IMR-90 (cell line): ENCODE measurements at regions of chr1 and their contacts with region 1.

Region 1: GRCh38 chr1:179081687-179082332 is at the start of gene TOR3A:
- DNase-seq: peak; percentile 85
- ATAC-seq: peak; percentile 92
- H3K4me3 ChIP-seq: peak within 1 kb of the TSS; percentile 79
- H3K27ac ChIP-seq: peak within 1 kb of the TSS; percentile 73
- H3K4me1 ChIP-seq: peaks cover 12% of the 10 kb centered on the region
- H3K27me3 ChIP-seq: no peaks in the 10 kb centered on the region
- CTCF ChIP-seq: no peak
- POLR2A ChIP-seq: peak; percentile 64; the same call in 1 of the 2 replicates
- RAD21 ChIP-seq: 0 out of 2 replicates have a peak, but pooled peaks have one; percentile 8
- total RNA-seq, gene TOR3A: 11.9 and 16.8 TPM in 2 replicates

Region 2: GRCh38 chr1:178220094-178220493 is 861.7 kb before region 1 on chr1:
- CTCF ChIA-PET with region 1: no interaction called
- POLR2A ChIA-PET with region 1: no interaction called
- dilution Hi-C with region 1: no loop called
- in situ Hi-C with region 1: no loop called
- intact Hi-C with region 1: no loop called
- DNase-seq: peak; percentile 65
- ATAC-seq: peak; percentile 42; the same call in 1 of the 2 replicates
- H3K4me3 ChIP-seq: no peak overlapping the region
- H3K27ac ChIP-seq: no peak overlapping the region
- H3K4me1 ChIP-seq: peaks cover 2% of the 10 kb centered on the region; the same call in 1 of the 2 replicates
- H3K27me3 ChIP-seq: no peaks in the 10 kb centered on the region
- CTCF ChIP-seq: no peak
- POLR2A ChIP-seq: no peak
- RAD21 ChIP-seq: no peak

Region 3: GRCh38 chr1:179025125-179025974 is 56.5 kb before region 1 on chr1 and contains the start of gene FAM20B:
- CTCF ChIA-PET with region 1: no interaction called
- POLR2A ChIA-PET with region 1: no interaction called
- dilution Hi-C with region 1: no loop called
- in situ Hi-C with region 1: no loop called
- intact Hi-C with region 1: loop called (anchors 5 kb)
- DNase-seq: peak; percentile 88
- ATAC-seq: peak; percentile 95
- H3K4me3 ChIP-seq: peak within 1 kb of the TSS; percentile 90
- H3K27ac ChIP-seq: peak within 1 kb of the TSS; percentile 33
- H3K4me1 ChIP-seq: no peaks in the 10 kb centered on the region
- H3K27me3 ChIP-seq: no peaks in the 10 kb centered on the region
- CTCF ChIP-seq: no peak
- POLR2A ChIP-seq: no peak
- RAD21 ChIP-seq: no peak
- total RNA-seq, gene FAM20B: 36.7 and 38.4 TPM in 2 replicates

Region 4: GRCh38 chr1:179046808-179047635 is 34.8 kb before region 1 on chr1:
- CTCF ChIA-PET with region 1: no interaction called
- POLR2A ChIA-PET with region 1: no interaction called
- dilution Hi-C with region 1: no loop called
- in situ Hi-C with region 1: no loop called
- intact Hi-C with region 1: no loop called
- DNase-seq: no peak
- ATAC-seq: peak; percentile 30
- H3K4me3 ChIP-seq: no peak overlapping the region
- H3K27ac ChIP-seq: no peak overlapping the region
- H3K4me1 ChIP-seq: peaks cover 3% of the 10 kb centered on the region
- H3K27me3 ChIP-seq: no peaks in the 10 kb centered on the region
- CTCF ChIP-seq: no peak
- POLR2A ChIP-seq: no peak
- RAD21 ChIP-seq: no peak

Region 5: GRCh38 chr1:179094823-179095222 is 13.0 kb after region 1 on chr1:
- CTCF ChIA-PET with region 1: no interaction called
- POLR2A ChIA-PET with region 1: no interaction called
- dilution Hi-C with region 1: no loop called
- in situ Hi-C with region 1: no loop called
- intact Hi-C with region 1: no loop called
- DNase-seq: no peak
- ATAC-seq: no peak
- H3K4me3 ChIP-seq: no peak overlapping the region
- H3K27ac ChIP-seq: no peak overlapping the region
- H3K4me1 ChIP-seq: peaks cover 10% of the 10 kb centered on the region
- H3K27me3 ChIP-seq: no peaks in the 10 kb centered on the region
- CTCF ChIP-seq: no peak
- POLR2A ChIP-seq: no peak
- RAD21 ChIP-seq: no peak

Region 6: DNA sequence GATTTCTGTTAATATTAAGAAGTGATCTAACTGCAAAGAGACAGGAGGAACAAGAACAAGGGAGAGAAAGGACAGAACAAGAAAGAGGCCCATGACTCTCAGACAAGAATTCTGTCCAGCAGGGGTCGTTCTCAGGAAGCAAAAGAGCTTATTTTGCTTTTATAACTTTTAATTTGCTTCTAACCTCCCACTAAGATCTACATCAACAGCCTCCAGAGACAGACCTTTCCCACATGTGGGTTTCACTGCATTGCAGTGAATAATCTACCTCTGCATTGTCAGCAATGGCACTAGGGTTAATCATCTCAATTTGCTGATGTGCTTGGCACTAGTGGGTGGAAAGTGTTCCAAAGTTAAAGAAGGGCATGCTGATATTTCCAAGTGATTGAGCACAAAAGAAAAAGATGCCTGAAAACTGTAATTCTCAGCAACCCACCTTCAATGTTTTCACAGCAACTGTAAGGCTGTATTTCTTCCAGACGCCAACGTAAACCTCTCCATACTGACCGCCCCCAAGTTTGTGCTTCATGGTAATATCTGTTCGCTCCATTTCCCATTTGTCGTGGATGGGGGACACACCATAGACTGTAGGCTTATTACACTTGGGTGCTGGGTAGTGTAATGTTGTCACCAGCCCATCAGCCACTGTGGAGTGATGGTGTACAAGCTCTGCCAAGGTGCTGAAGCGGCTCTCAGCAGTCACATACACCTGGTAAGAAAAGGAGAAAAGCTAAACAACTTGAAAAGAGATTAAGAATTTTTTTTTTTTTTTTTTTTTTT is 39.5 kb after region 1 on chr1:
- CTCF ChIA-PET with region 1: no interaction called
- POLR2A ChIA-PET with region 1: no interaction called
- dilution Hi-C with region 1: no loop called
- in situ Hi-C with region 1: no loop called
- intact Hi-C with region 1: loop called (anchors 2 kb)
- DNase-seq: peak; percentile 62
- ATAC-seq: peak; percentile 66
- H3K4me3 ChIP-seq: no peak overlapping the region
- H3K27ac ChIP-seq: no peak overlapping the region; the same call in 1 of the 2 replicates
- H3K4me1 ChIP-seq: peaks cover 5% of the 10 kb centered on the region
- H3K27me3 ChIP-seq: no peaks in the 10 kb centered on the region
- CTCF ChIP-seq: peak; percentile 64
- POLR2A ChIP-seq: no peak
- RAD21 ChIP-seq: peak; percentile 62

Region 7: GRCh38 chr1:179293340-179294327 is 211.8 kb after region 1 on chr1 and contains the start of gene SOAT1:
- CTCF ChIA-PET with region 1: interaction called, 3 read pairs
- POLR2A ChIA-PET with region 1: no interaction called
- dilution Hi-C with region 1: no loop called
- in situ Hi-C with region 1: no loop called
- intact Hi-C with region 1: loop called (anchors 1 kb)
- DNase-seq: peak; percentile 88
- ATAC-seq: peak; percentile 98
- H3K4me3 ChIP-seq: peak within 1 kb of the TSS; percentile 85
- H3K27ac ChIP-seq: peak within 1 kb of the TSS; percentile 89
- H3K4me1 ChIP-seq: peaks cover 2% of the 10 kb centered on the region; the same call in 1 of the 2 replicates
- H3K27me3 ChIP-seq: no peaks in the 10 kb centered on the region
- CTCF ChIP-seq: peak; percentile 18; the same call in 1 of the 2 replicates
- POLR2A ChIP-seq: peak; percentile 83
- RAD21 ChIP-seq: no peak; the same call in 1 of the 2 replicates
- total RNA-seq, gene SOAT1: 19.5 and 28.9 TPM in 2 replicates

Region 8: DNA sequence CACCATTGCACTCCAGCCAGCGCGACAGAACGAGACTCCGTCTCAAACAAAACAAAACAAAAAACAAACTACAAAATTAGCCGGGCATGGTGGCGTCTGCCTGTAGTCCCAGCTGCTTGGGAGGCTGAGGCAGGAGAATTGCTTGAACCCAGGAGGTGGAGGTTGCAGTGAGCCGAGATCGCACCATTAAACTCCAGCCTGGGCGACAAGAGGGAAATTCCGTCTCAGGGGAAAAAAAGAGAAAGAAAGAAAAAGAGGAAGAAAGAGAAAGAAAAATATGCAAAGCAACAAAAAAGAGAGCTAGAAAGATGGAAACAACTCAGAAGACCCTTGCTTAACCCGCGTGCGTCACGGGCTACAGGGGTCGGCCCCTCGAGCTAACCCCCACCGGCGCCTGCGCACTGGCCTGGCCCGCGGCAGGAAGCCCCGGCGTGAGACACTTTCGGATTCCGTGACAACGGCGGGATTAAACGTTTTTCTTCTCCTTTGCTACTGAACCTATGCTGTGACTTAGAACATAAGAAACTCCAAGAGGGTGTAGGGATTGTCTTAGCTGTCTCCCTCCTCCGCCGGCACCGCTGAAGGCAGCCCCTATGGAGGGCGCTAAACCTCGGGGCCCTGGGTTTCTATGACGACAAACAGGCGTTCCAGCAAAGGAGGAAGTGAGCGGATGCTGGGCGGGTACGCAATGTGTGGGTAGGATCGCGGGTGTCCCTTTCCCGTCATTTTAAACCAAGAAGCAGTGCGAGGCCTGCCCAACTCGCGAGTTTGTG is 283.7 kb after region 1 on chr1 and contains the start of gene AXDND1:
- CTCF ChIA-PET with region 1: no interaction called
- POLR2A ChIA-PET with region 1: no interaction called
- dilution Hi-C with region 1: no loop called
- in situ Hi-C with region 1: loop called (anchors 5 kb)
- intact Hi-C with region 1: loop called (anchors 1 kb)
- DNase-seq: peak; percentile 80
- ATAC-seq: peak; percentile 95
- H3K4me3 ChIP-seq: peak within 1 kb of the TSS; percentile 58
- H3K27ac ChIP-seq: peak within 1 kb of the TSS; percentile 91
- H3K4me1 ChIP-seq: peaks cover 3% of the 10 kb centered on the region; the same call in 1 of the 2 replicates
- H3K27me3 ChIP-seq: no peaks in the 10 kb centered on the region
- CTCF ChIP-seq: peak; percentile 28
- POLR2A ChIP-seq: no peak; the same call in 1 of the 2 replicates
- RAD21 ChIP-seq: no peak
- total RNA-seq, gene AXDND1: under 0.01 TPM in 1 of 2 replicates, not detected in the other